Right cardiac atrium (tissue), 5 donors: ENCODE measurements at regions of chr14 and their contacts with region 1.

Region 1: GRCh38 chr14:63388763-63389431 is 70.2 kb upstream of the GPHB5 start:
- DNase-seq: peak; percentile 53 to 79 (median 77)
- ATAC-seq: peak; percentile 86 to 88
- H3K4me3 ChIP-seq: no peak overlapping the region
- H3K27ac ChIP-seq: no peak overlapping the region
- H3K4me1 ChIP-seq: no peaks in the 10 kb centered on the region
- H3K27me3 ChIP-seq: no peaks in the 10 kb centered on the region

Region 2: DNA sequence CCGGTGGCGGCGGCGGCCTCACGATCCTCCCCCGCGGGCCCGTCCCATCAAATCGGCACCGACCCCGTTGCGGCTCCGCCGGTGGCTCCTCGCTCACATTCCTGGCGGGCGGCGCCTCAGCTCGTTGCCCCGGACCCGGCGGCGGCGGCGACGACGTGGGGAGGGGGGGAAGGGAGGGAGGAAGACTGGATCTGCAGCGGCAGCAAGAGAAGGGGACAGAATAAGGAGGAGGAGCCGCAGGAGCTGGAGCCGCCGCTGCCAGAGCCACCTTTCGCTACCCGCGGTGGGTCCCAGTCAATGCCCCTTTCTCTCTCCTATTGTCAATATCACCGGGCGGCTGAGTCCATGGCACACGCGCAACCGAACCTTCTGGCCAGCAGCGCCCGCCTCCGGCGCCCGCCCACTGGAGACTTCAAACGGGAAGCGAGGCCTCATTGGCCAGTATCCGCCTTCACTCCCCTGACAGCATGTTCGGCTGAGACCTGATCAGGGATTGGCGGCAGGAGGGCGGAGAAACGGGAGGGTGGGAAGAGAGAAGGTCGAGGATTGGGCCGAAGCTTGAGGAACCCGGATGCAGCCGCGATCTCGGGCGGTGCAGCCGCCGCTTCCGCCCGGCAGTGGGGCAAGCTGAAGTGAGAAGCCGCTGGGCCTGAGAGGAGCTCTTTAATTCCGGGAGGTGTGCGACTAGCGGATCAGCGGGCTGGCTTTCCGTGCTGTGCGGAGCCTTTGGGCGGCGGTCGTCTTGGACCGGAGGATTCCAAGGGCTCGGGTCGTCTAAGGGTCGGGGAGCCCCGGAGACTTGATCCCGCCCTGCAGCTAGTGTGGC is 154.3 kb after region 1 on chr14 and contains the start of gene PPP2R5E:
- intact Hi-C with region 1: loop called (anchors 5 kb)
- DNase-seq: peak; percentile 98 to 99 (median 99)
- ATAC-seq: peak; percentile 100
- H3K4me3 ChIP-seq: peak within 1 kb of the TSS; percentile 70
- H3K27ac ChIP-seq: peak within 1 kb of the TSS; percentile 83
- H3K4me1 ChIP-seq: no peaks in the 10 kb centered on the region
- H3K27me3 ChIP-seq: no peaks in the 10 kb centered on the region
- total RNA-seq, gene PPP2R5E: 35.7 to 38.4 (median 36.6) TPM

Region 3: DNA sequence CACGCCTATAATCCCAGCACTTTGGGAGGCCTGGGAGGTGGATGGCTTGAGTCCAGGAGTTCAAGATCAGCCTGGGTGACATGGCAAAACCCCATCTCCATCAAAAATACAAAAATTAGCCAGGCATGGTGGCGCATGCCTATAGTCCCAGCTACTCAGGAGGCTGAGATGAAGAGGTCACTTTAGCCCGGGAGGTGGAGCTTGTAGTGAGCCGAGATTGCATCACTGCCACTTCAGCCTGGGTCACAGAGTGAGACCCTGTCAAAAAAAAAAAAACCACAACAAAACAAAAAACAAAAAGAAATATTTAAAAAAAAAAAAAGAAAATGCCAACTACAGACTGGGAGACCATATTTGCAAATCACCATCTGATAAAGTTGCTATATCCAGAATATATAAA is 235.3 kb after region 1 on chr14:
- intact Hi-C with region 1: loop called in 1 of 4 experiments (anchors 10 kb)
- DNase-seq: no peak
- ATAC-seq: no peak
- H3K4me3 ChIP-seq: no peak overlapping the region
- H3K27ac ChIP-seq: no peak overlapping the region
- H3K4me1 ChIP-seq: no peaks in the 10 kb centered on the region
- H3K27me3 ChIP-seq: no peaks in the 10 kb centered on the region

Region 4: DNA sequence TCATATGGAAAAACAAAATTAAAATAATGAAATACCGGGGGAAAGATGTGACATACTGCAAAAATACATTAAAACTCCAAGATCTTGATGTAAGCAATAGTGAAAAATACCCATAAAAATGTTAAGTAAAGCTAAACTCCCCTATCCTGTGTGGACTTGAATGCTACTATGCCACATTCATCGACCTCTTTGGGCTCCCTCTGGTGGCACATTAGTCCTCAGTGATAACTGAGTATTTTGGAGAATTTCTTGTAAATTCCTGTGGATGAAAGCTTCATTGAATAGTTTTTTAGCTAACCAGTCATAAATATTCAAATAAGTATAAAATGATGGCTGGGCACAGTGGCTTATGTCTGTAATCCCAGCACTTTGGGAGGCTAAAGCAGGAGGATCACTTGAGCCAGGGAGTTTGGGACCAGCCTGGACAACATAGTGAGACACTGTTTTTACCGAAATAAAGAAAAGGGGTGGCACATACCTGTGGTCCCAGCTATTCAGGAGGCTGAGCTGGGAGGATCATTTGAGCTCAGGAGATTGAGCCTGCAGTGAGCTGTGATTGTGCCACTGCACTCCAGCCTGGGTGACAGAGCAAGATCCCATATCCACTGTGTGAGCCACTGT is 381.4 kb after region 1 on chr14:
- intact Hi-C with region 1: loop called in 1 of 4 experiments (anchors 5 kb)
- DNase-seq: no peak
- ATAC-seq: peak; percentile 63 to 68
- H3K4me3 ChIP-seq: no peak overlapping the region
- H3K27ac ChIP-seq: no peak overlapping the region
- H3K4me1 ChIP-seq: no peaks in the 10 kb centered on the region
- H3K27me3 ChIP-seq: no peaks in the 10 kb centered on the region